Upper lobe of right lung (tissue), 1 donor: ENCODE measurements at regions of chr12 and their contacts with region 1.

Region 1: GRCh38 chr12:64551698-64552097 is 58.6 kb upstream of the RASSF3 start:
- DNase-seq: no peak
- ATAC-seq: no peak
- H3K4me3 ChIP-seq: no peak overlapping the region
- H3K27ac ChIP-seq: no peak overlapping the region
- H3K4me1 ChIP-seq: no peaks in the 10 kb centered on the region
- H3K27me3 ChIP-seq: no peaks in the 10 kb centered on the region
- CTCF ChIP-seq: no peak

Region 2: GRCh38 chr12:64222009-64222765 is 329.5 kb before region 1 on chr12 and contains the start of gene KICS2:
- intact Hi-C with region 1: no loop called
- DNase-seq: peak; percentile 97
- ATAC-seq: peak; percentile 99
- H3K4me3 ChIP-seq: peak within 1 kb of the TSS; percentile 86
- H3K27ac ChIP-seq: peak within 1 kb of the TSS; percentile 97
- H3K4me1 ChIP-seq: peaks cover 8% of the 10 kb centered on the region
- H3K27me3 ChIP-seq: no peaks in the 10 kb centered on the region
- CTCF ChIP-seq: peak; percentile 5
- total RNA-seq, gene KICS2: 5.4 TPM

Region 3: GRCh38 chr12:64696080-64696741 is 144.5 kb after region 1 on chr12:
- intact Hi-C with region 1: loop called (anchors 5 kb)
- DNase-seq: no peak
- ATAC-seq: no peak
- H3K4me3 ChIP-seq: no peak overlapping the region
- H3K27ac ChIP-seq: no peak overlapping the region
- H3K4me1 ChIP-seq: peaks cover 22% of the 10 kb centered on the region
- H3K27me3 ChIP-seq: no peaks in the 10 kb centered on the region
- CTCF ChIP-seq: peak; percentile 43